ENCODE measurements at regions of chrX and their contacts with region 1.

Region 1: DNA sequence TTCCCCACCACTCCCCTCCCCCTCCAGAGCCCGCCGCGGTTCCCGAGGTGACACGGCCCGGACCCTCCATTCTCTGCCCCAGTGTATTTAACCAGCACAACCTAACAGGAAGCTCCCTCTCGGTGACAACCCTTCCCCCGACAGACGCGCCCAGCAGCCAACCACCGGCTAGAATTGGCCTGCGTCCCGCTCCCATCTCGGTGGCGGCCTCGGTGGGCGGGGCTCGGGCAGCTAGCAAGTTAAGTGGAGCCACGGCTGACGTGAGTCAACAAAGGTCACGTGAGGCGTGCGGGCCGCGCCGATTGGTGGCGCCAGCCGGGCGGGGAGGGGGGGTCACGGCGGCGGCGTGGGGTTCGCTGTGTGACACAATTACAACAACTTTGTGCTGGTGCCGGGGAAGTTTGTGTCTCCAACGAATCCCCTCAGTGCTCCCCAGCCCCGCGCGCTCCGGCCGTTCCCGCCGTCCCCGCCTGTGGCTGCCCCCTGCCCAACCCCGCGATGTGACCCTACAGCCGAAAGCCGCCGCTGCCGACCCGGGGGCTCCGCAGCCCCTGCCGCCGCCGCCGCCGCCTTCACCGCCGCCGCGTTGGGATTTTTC is at the start of gene KDM6A:
- DNase-seq: peak; percentile 96
- H3K4me3 ChIP-seq: peak within 1 kb of the TSS; percentile 75 to 96 (median 88)
- H3K27ac ChIP-seq: peak within 1 kb of the TSS; percentile 80
- H3K4me1 ChIP-seq: peaks cover 6% of the 10 kb centered on the region
- H3K27me3 ChIP-seq: no peaks in the 10 kb centered on the region
- CTCF ChIP-seq: no peak
- POLR2A ChIP-seq: no peak
- total RNA-seq, gene KDM6A: 16.1 and 20.6 TPM in 2 replicates

Region 2: DNA sequence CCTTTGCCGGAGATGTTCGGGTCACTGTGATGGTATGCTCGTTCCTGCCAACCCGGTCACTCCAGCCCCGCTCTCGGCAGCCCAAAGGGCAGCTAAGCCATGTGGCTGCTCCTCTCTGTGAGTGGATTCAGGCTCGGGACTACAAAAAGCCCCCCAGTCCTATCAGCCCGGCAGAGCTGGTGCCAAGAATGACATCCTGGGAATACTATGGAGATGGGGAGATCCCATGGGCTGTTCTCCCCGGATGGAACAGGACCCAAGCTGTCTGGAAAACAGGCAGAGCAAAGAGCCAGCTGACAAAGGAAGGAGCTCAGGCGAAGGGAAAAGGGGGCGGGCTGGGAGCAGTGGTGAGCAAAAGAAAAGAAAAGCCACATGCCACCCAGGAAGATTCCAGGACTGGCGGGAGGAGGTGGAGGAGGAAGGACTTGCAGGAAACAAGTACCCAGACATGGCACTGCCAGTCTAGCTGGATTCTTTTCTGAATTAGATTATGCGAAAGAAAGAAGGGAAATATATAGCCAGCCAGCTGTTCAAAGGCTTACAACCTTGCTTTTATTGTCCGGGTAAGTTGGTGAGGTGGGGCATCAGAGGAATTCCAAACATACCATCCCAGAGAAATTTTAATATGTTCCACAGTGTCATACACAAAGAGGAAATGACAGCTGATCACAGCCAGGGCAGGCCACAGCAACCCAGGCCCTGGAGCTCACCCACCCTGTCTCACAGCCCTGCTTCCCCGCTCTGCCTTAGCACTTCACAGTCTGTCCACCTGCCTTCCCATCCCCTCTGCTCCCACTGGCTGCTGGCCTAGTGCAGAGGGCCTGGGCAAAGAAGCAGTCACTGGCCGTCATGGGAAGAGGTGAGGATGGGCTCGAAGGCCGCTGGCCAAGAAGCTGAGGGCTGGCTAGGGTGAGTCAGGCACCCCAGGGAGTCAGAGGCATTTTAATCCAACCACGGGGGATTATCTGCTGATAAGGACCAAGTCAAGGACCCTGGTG is 903.1 kb before region 1 on chrX:
- CTCF ChIA-PET with region 1: no interaction called
- POLR2A ChIA-PET with region 1: no interaction called
- dilution Hi-C with region 1: no loop called
- intact Hi-C with region 1: loop called (anchors 10 kb)
- DNase-seq: no peak
- H3K4me3 ChIP-seq: no peak overlapping the region
- H3K27ac ChIP-seq: no peak overlapping the region
- H3K4me1 ChIP-seq: peaks cover 17% of the 10 kb centered on the region
- H3K27me3 ChIP-seq: no peaks in the 10 kb centered on the region
- CTCF ChIP-seq: no peak
- POLR2A ChIP-seq: no peak

Region 3: DNA sequence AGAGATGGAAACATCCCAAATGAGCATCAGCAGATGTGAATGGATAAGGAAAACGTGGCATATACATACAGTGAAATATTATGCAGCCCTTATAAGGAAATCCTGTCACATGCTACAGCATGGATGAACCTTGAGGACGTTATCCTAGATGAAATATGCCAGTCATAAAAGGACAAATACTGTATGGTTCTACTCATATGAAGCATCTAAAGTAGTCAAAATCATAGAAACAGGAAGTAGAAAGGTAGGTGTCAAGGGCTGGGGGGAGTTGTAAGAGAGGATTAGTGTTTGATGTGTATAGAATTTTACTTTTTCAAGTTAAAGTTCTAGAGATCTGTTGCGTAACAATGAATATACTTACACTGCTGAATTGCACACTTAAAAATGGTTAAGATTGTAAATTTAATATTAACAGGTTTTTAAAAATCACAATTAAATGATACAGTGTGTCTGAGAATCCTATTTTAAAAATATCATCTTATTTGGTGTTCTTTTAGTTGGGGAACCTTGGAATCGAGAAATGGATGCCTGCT is 58.6 kb after region 1 on chrX:
- CTCF ChIA-PET with region 1: no interaction called
- POLR2A ChIA-PET with region 1: no interaction called
- dilution Hi-C with region 1: no loop called
- intact Hi-C with region 1: no loop called
- DNase-seq: no peak
- H3K4me3 ChIP-seq: no peak overlapping the region
- H3K27ac ChIP-seq: no peak overlapping the region
- H3K4me1 ChIP-seq: no peaks in the 10 kb centered on the region
- H3K27me3 ChIP-seq: no peaks in the 10 kb centered on the region
- CTCF ChIP-seq: no peak
- POLR2A ChIP-seq: no peak

Region 4: GRCh38 chrX:44945736-44946135 is 72.8 kb after region 1 on chrX:
- CTCF ChIA-PET with region 1: no interaction called
- POLR2A ChIA-PET with region 1: no interaction called
- dilution Hi-C with region 1: no loop called
- intact Hi-C with region 1: loop called (anchors 5 kb)
- DNase-seq: no peak
- H3K4me3 ChIP-seq: no peak overlapping the region
- H3K27ac ChIP-seq: no peak overlapping the region
- H3K4me1 ChIP-seq: peaks cover 5% of the 10 kb centered on the region
- H3K27me3 ChIP-seq: no peaks in the 10 kb centered on the region
- CTCF ChIP-seq: no peak
- POLR2A ChIP-seq: no peak

Region 5: DNA sequence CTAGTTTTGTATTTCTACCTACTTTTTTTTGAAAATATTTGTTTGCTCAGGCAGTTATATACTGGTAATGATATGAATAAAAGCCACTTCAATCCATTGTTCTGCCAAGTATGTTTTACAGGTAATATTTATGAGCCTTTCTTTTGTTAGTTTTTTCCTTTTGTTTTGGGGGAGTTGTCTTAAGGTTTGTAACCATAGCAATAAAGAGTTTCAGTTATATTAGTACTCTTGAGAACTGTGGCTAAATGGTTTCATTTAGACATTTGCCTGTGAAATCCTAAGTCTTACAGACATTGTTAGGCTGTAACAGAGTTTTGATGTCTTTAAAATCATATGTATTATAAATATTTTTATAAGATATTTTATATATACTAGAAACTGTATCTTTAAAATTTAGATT is 177.6 kb after region 1 on chrX:
- CTCF ChIA-PET with region 1: no interaction called
- POLR2A ChIA-PET with region 1: no interaction called
- dilution Hi-C with region 1: no loop called
- intact Hi-C with region 1: no loop called
- DNase-seq: no peak
- H3K4me3 ChIP-seq: no peak overlapping the region
- H3K27ac ChIP-seq: no peak overlapping the region
- H3K4me1 ChIP-seq: no peaks in the 10 kb centered on the region
- H3K27me3 ChIP-seq: no peaks in the 10 kb centered on the region
- CTCF ChIP-seq: no peak
- POLR2A ChIP-seq: no peak

Region 6: DNA sequence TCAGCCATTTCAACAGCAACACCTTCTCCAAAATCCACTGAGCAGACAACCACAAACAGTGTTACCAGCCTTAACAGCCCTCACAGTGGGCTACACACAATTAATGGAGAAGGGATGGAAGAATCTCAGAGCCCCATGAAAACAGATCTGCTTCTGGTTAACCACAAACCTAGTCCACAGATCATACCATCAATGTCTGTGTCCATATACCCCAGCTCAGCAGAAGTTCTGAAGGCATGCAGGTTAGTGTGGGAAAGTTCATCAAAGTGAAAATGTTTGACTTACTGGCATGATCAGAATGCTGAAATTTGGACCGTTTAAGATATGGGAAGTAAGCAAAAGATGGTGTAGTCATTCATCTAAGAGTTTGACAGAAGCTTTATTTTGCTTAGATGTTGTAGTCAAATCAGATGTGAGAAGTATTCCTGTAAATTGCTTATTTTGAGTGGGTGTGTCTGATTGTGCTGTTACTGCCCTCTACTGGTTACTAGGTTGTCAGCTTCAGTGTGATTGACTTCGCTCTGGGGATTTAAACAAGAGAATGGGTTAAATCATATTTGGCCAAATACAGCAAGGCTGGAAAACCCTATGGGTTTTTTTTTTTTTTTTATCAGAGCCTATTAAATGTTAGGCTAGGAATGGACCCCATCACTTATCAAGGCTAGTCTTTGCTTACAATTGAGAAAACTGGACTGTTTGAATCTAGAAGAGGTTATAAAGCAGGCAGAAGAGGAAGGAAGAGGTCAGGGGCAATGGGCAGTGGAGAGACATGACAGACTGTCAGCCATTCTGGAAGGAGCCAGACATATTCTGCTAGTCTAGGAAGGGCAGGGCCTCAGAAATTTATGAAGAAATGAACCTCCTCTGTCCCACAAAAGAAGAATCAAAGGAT is 197.4 kb after region 1 on chrX:
- CTCF ChIA-PET with region 1: interaction called, 16 read pairs
- POLR2A ChIA-PET with region 1: no interaction called
- dilution Hi-C with region 1: no loop called
- intact Hi-C with region 1: loop called (anchors 1 kb)
- DNase-seq: peak; percentile 69
- H3K4me3 ChIP-seq: no peak overlapping the region
- H3K27ac ChIP-seq: no peak overlapping the region
- H3K4me1 ChIP-seq: peaks cover 4% of the 10 kb centered on the region
- H3K27me3 ChIP-seq: no peaks in the 10 kb centered on the region
- CTCF ChIP-seq: peak; percentile 33 to 44
- POLR2A ChIP-seq: no peak

Region 7: DNA sequence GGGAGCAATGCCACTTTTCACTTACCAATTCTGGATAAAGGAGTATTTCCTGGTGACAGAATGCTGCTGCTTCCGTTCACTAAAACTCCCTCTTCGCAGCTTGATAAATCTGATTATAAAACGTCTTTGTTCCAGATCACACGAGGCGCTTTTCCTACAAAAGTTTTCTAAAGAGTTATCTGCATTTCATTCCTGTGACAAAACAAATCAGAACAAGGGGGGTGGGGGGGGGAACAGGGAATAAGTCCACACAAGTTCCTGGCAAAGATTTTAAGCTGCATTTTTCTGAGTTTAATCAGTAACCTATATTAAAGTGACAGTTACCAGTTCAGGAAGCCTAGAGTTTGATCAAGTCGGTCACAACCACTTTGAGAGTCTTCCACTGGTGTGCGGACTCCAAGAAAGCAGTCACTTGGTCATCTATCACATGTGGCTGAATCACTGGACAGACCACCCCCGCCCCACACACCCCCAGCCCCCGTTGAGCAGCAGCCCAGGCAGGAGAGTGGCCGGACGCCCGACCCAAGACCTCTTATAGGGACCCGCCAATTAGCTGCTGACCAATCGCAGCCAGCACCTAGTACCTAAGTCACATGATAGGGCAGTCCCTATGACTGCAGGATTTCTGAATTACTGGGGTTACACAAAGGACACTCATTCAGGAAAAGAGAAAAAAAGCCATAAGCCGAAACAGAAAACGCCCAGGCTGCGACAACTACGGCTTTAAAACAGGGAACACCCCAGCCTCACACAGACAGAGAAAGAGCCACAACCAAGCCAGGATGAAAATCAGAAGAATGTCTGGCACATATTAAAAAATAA is 897.1 kb after region 1 on chrX:
- CTCF ChIA-PET with region 1: no interaction called
- POLR2A ChIA-PET with region 1: no interaction called
- dilution Hi-C with region 1: no loop called
- intact Hi-C with region 1: loop called (anchors 5 kb)
- DNase-seq: peak; percentile 87
- H3K4me3 ChIP-seq: peak overlapping the region; percentile 55 to 100 (median 94)
- H3K27ac ChIP-seq: peak overlapping the region; percentile 87
- H3K4me1 ChIP-seq: peaks cover 40% of the 10 kb centered on the region
- H3K27me3 ChIP-seq: no peaks in the 10 kb centered on the region
- CTCF ChIP-seq: no peak
- POLR2A ChIP-seq: peak; percentile 70